ENCODE measurements at regions of chr9 and their contacts with region 1.

Region 1: GRCh38 chr9:92764988-92765936 is 629 bp upstream of the BICD2 start:
- DNase-seq: peak; percentile 99
- ATAC-seq: peak; percentile 95
- H3K4me3 Mint-ChIP-seq: peak overlapping the region; percentile 89
- H3K27ac Mint-ChIP-seq: peak overlapping the region; percentile 90
- H3K4me1 Mint-ChIP-seq: peaks cover 47% of the 10 kb centered on the region
- H3K27me3 Mint-ChIP-seq: no peaks in the 10 kb centered on the region

Region 2: DNA sequence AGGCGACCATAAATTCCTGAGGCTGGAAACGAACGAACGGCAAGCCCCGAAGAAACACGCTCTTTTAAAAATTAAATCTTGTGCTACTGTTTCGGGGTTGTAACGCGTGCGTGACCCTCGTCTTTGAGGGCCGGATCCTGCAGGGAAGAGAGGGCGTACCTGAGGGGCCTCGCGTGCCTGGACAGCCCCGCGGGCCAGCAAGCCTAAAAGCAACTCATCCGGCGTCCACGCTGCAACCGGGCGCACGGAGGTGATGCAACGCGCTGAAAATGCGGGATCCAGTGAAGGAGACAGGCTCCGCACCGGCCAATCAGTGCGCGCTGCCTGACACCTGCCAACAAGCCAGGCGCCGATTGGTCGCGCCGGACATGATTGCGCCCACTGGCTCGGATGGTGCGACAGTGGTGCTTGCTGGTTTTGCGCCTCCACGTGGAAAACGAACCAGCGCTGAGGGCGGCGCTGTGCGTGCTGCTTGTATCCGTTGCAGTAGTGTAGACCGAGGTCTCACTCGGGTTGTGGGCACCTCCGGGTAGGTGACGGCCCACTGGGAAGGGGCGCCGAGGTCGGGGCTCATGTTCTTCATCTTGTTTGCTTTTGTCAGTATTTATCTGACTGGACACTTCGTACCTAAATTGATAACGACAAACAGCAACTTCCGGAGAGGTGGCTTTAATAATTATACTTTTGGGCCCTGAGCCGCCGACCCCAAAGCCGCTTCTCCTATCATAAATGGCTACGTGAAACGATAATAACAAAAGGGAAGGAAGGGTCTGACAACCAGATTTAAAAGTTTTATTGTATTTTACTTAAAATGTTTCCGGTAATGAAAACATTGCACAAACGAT is 471.6 kb before region 1 on chr9 and contains the start of gene IARS1:
- CTCF ChIA-PET with region 1: no interaction called
- POLR2A ChIA-PET with region 1: no interaction called
- intact Hi-C with region 1: loop called in 1 of 2 experiments (anchors 1 kb)
- DNase-seq: peak; percentile 99
- ATAC-seq: peak; percentile 95
- H3K4me3 Mint-ChIP-seq: peak within 1 kb of the TSS; percentile 87
- H3K27ac Mint-ChIP-seq: peak within 1 kb of the TSS; percentile 98
- H3K4me1 Mint-ChIP-seq: peaks cover 56% of the 10 kb centered on the region
- H3K27me3 Mint-ChIP-seq: no peaks in the 10 kb centered on the region
- total RNA-seq, gene IARS1: 261 to 286 TPM

Region 3: GRCh38 chr9:92669890-92670708 is 95.2 kb before region 1 on chr9 and contains the start of gene IPPK:
- CTCF ChIA-PET with region 1: interaction called, 3 read pairs
- POLR2A ChIA-PET with region 1: interaction called, 6 read pairs
- intact Hi-C with region 1: loop called (anchors 1 kb)
- DNase-seq: peak; percentile 99
- ATAC-seq: peak; percentile 94
- H3K4me3 Mint-ChIP-seq: peak within 1 kb of the TSS; percentile 96
- H3K27ac Mint-ChIP-seq: peak within 1 kb of the TSS; percentile 93
- H3K4me1 Mint-ChIP-seq: peaks cover 33% of the 10 kb centered on the region
- H3K27me3 Mint-ChIP-seq: no peaks in the 10 kb centered on the region
- total RNA-seq, gene IPPK: 9.9 to 12.2 TPM

Region 4: DNA sequence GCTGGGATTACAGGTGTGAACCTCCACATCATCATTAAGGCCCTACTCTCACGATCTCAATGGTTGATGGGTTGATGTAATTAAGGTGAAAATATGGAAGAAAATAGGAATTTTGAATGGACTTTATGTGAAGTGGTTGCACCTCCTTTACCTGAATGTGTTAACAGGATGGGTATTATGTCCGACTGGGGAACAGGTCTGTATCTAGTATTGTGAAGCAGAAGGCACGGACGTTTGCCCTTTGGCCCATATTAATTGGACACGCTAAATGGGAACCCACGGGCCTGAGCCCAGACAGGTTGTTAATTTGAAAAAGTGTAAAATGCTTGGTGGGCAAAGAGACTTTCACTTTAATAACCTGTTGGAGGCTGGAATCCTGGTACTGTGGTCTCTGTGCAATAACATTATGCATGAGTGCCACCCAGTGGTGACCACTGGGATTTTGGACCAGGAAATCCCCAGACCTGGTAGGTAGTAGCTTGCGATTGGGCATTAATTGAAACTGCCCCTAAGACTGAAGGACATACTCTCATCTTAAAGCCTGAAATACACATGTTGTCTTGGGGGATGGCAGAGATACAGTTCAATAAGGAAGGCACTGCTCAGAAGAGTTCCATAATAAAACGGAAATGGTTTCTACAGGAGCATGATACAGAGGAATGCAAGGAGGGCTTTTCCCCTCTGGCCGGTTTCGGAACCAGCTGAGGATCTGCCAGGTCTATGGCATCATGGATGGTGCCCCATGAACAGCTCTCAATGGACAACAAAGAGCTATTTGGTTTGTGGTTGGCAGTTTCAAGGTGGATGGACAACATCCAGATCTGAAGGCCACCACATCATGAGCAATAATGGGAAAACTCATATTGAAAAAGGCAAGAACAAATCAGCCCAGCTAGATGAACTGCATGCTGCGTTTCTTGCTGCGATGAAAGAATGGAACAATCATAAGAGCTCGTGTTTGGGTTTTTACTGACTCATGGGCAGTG is 25.6 kb after region 1 on chr9:
- CTCF ChIA-PET with region 1: interaction called, 8 read pairs
- POLR2A ChIA-PET with region 1: no interaction called
- intact Hi-C with region 1: loop called (anchors 1 kb)
- DNase-seq: peak; percentile 84
- ATAC-seq: peak; percentile 87
- H3K4me3 Mint-ChIP-seq: no peak overlapping the region
- H3K27ac Mint-ChIP-seq: no peak overlapping the region
- H3K4me1 Mint-ChIP-seq: peaks cover 9% of the 10 kb centered on the region
- H3K27me3 Mint-ChIP-seq: no peaks in the 10 kb centered on the region

Region 5: DNA sequence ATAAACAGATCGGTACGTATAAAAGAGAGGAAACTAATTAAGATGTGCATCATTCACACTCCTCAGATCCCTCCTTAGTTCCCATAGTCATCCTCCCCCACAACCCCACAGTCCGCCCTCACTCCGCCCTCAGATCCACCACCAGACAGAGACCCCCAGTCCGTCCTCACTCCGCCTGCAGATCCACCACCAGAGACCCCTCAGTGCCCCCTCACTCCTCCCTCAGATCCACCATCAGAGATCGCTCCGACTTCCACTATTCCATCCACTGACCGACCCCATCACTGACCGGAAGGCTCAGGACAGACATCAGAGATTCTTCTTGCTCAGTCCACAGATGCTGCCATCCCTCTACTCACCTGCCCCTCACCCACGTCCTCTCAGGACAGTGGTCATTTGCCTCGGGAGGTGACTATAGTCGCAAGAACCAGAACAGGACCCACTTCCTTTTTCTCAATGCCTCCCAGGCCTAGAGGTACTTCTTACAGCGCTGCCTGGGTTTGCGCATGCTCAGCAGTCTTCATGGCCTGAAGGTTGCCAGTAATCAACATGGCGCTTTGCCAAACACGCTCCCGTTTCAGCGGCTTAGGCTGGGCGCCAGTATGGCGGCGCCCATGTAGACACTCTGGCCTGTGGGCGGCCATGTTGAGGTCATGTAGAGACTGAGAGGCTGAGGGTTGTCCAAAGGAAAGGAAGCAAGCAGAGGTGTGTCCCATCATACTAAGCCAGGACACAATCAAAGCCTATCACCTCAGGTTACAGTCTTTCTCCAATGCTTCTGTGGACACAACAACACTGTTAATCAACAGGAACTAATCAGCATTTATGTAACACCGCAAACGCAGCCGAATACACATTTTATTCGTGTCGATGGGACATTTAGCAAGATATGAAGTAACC is 112.5 kb after region 1 on chr9 and contains the start of gene ZNF484:
- CTCF ChIA-PET with region 1: no interaction called
- POLR2A ChIA-PET with region 1: no interaction called
- intact Hi-C with region 1: loop called in 1 of 2 experiments (anchors 1 kb)
- DNase-seq: peak; percentile 98
- ATAC-seq: peak; percentile 97
- H3K4me3 Mint-ChIP-seq: peak within 1 kb of the TSS; percentile 99
- H3K27ac Mint-ChIP-seq: peak within 1 kb of the TSS; percentile 97
- H3K4me1 Mint-ChIP-seq: peaks cover 46% of the 10 kb centered on the region
- H3K27me3 Mint-ChIP-seq: no peaks in the 10 kb centered on the region
- total RNA-seq, gene ZNF484: 7.2 to 9.8 TPM

Region 6: DNA sequence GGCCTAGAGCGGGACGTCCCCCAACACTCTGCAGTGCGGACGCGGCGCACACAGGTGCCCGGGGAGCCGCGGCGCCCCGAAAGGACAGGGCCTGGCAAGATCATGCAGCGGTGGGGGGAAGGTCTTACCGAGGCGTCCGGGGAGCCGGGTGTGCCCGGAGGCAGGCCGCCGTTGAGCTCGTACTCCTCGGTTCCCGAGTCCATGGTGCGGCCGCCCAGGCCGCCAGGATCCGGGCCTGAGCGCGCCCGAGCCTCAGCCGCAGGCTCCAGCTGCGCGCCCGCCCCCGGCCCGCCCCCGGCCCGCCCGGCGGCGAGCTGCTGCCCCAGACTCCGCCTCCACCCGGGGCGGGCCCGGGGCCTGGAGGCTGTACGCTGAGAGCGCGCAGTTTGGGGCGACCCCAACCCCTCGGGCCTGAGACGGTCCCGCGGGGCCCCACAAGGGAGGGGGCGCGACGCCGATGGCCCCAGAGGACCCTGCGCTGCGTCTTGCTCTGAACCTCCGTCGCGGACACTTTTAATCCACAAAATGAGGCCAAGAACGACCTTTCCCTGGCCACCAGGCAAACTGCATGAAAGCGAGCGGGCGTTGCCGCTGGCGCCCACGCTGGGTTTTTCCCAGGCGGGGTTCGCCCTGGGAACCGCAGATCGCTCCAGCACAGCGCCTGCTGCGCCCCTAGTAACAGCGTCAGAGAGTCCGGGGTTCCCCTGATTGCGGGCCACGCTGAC is 368.9 kb after region 1 on chr9 and contains the start of gene NINJ1:
- CTCF ChIA-PET with region 1: no interaction called
- POLR2A ChIA-PET with region 1: no interaction called
- intact Hi-C with region 1: loop called in 1 of 2 experiments (anchors 1 kb)
- DNase-seq: peak; percentile 95
- ATAC-seq: peak; percentile 83
- H3K4me3 Mint-ChIP-seq: peak within 1 kb of the TSS; percentile 88
- H3K27ac Mint-ChIP-seq: peak within 1 kb of the TSS; percentile 92
- H3K4me1 Mint-ChIP-seq: peaks cover 63% of the 10 kb centered on the region
- H3K27me3 Mint-ChIP-seq: no peaks in the 10 kb centered on the region
- total RNA-seq, gene NINJ1: 77.4 to 108 TPM

Region 7: DNA sequence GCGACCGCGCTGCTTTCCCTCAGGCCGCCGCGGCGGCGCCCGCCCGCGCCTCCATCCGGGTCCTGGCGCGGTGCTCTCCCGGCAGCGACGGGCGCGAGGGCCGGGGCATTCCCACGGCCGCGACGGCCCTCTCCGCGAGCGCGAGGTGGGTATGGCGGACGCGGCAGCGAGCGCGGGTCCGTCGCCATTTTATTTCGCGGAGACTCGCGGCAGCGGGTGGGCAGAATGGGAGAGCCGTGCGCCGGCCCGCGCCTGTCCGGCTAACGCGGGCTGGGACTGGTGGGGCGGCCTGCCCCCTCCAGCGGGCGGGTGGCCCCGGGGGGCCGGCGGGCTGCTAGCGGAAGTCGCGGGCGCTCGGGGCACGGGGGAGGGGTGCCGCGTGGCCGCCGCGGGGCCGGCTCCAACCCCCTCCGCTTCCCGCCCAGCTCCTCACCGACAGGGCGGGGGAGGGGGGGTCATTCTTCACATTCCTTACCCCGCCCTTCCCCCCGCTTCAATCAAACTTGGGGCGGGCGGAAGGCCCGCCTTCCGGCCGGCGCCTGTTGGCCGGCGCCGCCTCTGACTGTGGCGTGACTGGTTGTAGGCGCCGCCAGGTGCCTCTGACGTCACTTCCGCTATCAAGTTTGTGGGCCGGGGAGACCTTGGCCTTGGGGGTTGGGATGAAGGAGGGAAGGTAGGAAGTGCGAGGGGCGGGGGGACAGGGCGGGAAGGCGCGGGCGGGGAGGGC is 1401.1 kb after region 1 on chr9:
- CTCF ChIA-PET with region 1: no interaction called
- POLR2A ChIA-PET with region 1: no interaction called
- intact Hi-C with region 1: loop called in 1 of 2 experiments (anchors 2 kb)
- DNase-seq: peak; percentile 97
- ATAC-seq: peak; percentile 65
- H3K4me3 Mint-ChIP-seq: peak overlapping the region; percentile 89
- H3K27ac Mint-ChIP-seq: peak overlapping the region; percentile 91
- H3K4me1 Mint-ChIP-seq: peaks cover 34% of the 10 kb centered on the region
- H3K27me3 Mint-ChIP-seq: no peaks in the 10 kb centered on the region